ENCODE measurements at regions of chr20 and their contacts with region 1.

Region 1: DNA sequence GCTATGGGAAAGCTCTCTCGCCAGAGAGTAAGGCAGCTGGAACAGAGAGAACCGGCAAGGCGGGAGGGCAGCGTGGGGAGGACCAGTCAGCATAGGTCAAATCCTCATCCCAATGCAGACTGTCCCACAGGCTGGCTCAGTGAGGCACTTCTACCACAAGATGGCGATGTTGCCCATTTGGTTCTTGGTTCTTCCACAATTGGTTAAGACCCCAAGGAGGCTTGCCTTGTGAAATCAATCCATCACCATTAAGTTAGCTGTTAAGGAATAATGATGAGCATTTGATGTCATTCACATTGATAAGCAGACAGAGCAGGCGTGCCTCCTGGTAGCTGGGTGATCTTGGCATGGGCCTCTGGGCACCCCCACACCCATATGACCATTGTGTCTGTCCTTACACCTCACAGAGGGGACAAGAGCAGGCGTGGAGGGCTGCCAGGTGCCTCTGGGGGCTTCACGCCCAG is 2.4 kb downstream of the CSTL1 start:
- DNase-seq: peak; percentile 78
- ATAC-seq: peak; percentile 85
- H3K4me3 Mint-ChIP-seq: no peak overlapping the region
- H3K27ac Mint-ChIP-seq: no peak overlapping the region
- H3K4me1 Mint-ChIP-seq: no peaks in the 10 kb centered on the region
- H3K27me3 Mint-ChIP-seq: no peaks in the 10 kb centered on the region

Region 2: GRCh38 chr20:23350196-23350903 is 91.5 kb before region 1 on chr20 and contains the start of gene NXT1:
- CTCF ChIA-PET with region 1: interaction called, 21 read pairs
- DNase-seq: peak; percentile 97
- ATAC-seq: peak; percentile 87
- H3K4me3 Mint-ChIP-seq: peak within 1 kb of the TSS; percentile 82
- H3K27ac Mint-ChIP-seq: peak within 1 kb of the TSS; percentile 99
- H3K4me1 Mint-ChIP-seq: peaks cover 42% of the 10 kb centered on the region
- H3K27me3 Mint-ChIP-seq: no peaks in the 10 kb centered on the region
- total RNA-seq, gene NXT1: 34.0 to 48.3 TPM

Region 3: DNA sequence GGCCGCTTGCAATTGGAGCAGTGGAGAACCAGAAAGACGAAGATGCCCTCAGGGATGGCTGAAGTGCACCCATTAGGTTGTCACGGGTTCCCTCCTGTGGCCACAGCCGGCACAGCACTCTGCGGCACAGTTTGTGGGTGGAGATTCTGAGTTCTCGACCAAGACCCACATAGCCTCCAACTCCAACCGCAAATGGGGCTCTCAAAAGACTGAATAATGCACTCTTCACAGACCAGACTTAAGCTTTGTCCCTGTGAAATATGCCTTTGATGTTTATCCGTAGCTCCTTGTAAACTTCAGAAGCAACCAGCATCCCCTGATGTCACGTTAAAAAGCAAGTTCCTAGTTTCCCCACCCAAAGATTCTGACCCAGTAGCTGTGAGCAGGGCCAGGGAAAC is 164.8 kb after region 1 on chr20:
- CTCF ChIA-PET with region 1: interaction called, 50 read pairs
- DNase-seq: peak; percentile 80
- ATAC-seq: peak; percentile 89
- H3K4me3 Mint-ChIP-seq: no peak overlapping the region
- H3K27ac Mint-ChIP-seq: no peak overlapping the region
- H3K4me1 Mint-ChIP-seq: peaks cover 8% of the 10 kb centered on the region
- H3K27me3 Mint-ChIP-seq: peaks cover 3% of the 10 kb centered on the region